CD8-positive, alpha-beta T cell (primary cell): ENCODE measurements at regions of chr10 and their contacts with region 1.

Region 1: GRCh38 chr10:100009793-100010676 is at the start of gene DNMBP:
- DNase-seq: peak; percentile 65 to 93 (median 83)
- ATAC-seq: peak; percentile 95
- H3K4me3 ChIP-seq: peak within 1 kb of the TSS; percentile 68 to 76
- H3K4me3 Mint-ChIP-seq: peak within 1 kb of the TSS; percentile 91
- H3K27ac ChIP-seq: peak within 1 kb of the TSS; percentile 36 to 40
- H3K27ac Mint-ChIP-seq: peak within 1 kb of the TSS; percentile 86
- H3K4me1 ChIP-seq: peaks cover 17% of the 10 kb centered on the region
- H3K4me1 Mint-ChIP-seq: peaks cover 44% of the 10 kb centered on the region
- H3K27me3 ChIP-seq: no peaks in the 10 kb centered on the region
- H3K27me3 Mint-ChIP-seq: no peaks in the 10 kb centered on the region
- CTCF ChIP-seq: peak; percentile 47
- total RNA-seq, gene DNMBP: 4.0 to 4.1 TPM

Region 2: GRCh38 chr10:98446661-98447221 is 1563.3 kb before region 1 on chr10 and contains the start of gene HPS1:
- CTCF ChIA-PET with region 1: no interaction called
- POLR2A ChIA-PET with region 1: no interaction called
- intact Hi-C with region 1: loop called in 1 of 2 experiments (anchors 5 kb)
- DNase-seq: peak; percentile 60 to 89 (median 79)
- ATAC-seq: peak; percentile 85
- H3K4me3 ChIP-seq: peak within 1 kb of the TSS; percentile 74 to 91
- H3K4me3 Mint-ChIP-seq: peak within 1 kb of the TSS; percentile 90
- H3K27ac ChIP-seq: peak within 1 kb of the TSS; percentile 81 to 90
- H3K27ac Mint-ChIP-seq: peak within 1 kb of the TSS; percentile 92
- H3K4me1 ChIP-seq: peaks cover 16% of the 10 kb centered on the region
- H3K4me1 Mint-ChIP-seq: peaks cover 45% of the 10 kb centered on the region
- H3K27me3 ChIP-seq: no peaks in the 10 kb centered on the region
- H3K27me3 Mint-ChIP-seq: peaks cover under 1% of the 10 kb centered on the region
- CTCF ChIP-seq: no peak
- total RNA-seq, gene HPS1: 54.1 to 54.3 TPM

Region 3: DNA sequence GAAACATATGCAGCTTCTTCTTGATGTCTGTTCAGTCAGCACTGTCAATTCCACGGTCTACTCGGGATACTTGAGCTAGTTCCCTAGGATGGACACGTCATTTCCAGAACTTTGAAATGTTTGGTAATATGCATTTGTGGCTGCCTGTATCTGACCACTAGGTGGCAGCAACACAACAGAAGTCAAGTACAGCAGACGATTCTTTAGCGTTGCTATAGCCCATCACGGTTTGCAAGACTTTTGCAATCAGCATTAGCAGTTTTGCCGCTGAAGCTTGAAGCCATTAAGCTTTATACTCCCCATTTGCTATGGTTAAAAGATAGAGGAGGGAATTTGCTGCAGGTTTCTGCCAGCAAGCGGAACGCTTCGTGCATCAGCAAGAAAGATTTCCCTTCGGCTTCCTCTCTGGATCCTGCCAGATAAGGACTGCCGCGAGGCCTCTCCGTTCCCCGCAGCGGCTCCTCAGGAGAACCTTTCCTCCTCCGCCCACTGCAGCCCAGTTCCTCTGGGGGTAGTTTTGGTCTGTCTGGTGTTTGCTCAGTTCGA is 164.1 kb before region 1 on chr10:
- CTCF ChIA-PET with region 1: interaction called, 124 read pairs
- POLR2A ChIA-PET with region 1: interaction called, 7 read pairs
- intact Hi-C with region 1: loop called (anchors 1 kb)
- DNase-seq: peak; percentile 28 to 87 (median 72)
- ATAC-seq: peak; percentile 84
- H3K4me3 ChIP-seq: peak overlapping the region in 1 of 2 experiments; percentile 7
- H3K4me3 Mint-ChIP-seq: peak overlapping the region; percentile 30
- H3K27ac ChIP-seq: no peak overlapping the region
- H3K27ac Mint-ChIP-seq: no peak overlapping the region
- H3K4me1 ChIP-seq: no peaks in the 10 kb centered on the region
- H3K4me1 Mint-ChIP-seq: peaks cover 7% of the 10 kb centered on the region
- H3K27me3 ChIP-seq: no peaks in the 10 kb centered on the region
- H3K27me3 Mint-ChIP-seq: no peaks in the 10 kb centered on the region
- CTCF ChIP-seq: peak; percentile 94

Region 4: DNA sequence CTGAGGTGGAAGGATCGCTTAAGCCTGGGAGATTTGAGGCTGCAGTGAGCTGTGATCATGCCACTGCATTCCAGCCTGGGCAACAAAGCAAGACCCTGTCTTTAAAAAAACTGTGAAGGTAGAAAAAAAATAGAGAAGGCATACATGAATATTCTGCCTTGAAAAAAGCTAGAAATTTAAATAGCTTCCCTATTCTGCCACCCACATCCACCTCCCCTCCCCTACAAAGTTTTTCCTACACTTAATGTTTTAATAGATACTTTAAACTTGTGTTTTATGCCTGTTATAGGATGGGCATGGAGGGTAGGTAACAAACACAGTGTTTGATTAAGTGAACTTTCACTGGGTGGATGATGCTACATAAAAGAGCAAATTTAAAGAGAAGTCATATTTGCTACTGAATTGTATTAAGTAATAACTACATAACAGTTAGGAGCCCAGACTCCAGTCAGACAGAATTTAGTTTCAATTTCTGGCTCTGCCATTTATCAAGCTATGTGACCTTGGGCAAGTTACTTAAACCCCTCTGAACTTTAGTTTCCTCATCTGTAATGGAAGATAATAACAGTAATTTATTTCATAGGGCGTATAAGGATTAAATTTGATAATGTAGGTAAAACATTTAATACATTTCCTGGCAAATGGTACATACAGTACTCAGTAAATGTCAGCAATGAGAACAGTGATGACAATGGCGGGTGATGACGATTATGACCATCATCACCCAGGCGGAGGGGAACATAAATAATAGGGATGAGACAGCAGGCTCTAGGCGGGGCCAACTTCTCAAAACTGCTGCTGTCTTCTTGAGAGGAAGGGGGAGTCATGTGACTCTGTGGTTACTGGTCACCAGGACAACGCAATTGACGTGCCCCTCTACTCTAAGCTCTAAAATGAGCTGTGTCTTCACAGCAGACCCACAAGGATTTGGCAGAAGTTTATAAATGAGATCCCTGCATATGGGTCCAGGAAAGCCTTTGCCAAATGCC is 16.0 kb before region 1 on chr10:
- CTCF ChIA-PET with region 1: interaction called, 14 read pairs
- POLR2A ChIA-PET with region 1: interaction called, 4 read pairs
- intact Hi-C with region 1: loop called (anchors 2 kb)
- DNase-seq: peak; percentile 18 to 83 (median 59)
- ATAC-seq: peak; percentile 97
- H3K4me3 ChIP-seq: peak overlapping the region in 1 of 2 experiments; percentile 6
- H3K4me3 Mint-ChIP-seq: peak overlapping the region; percentile 71
- H3K27ac ChIP-seq: peak overlapping the region; percentile 6 to 23
- H3K27ac Mint-ChIP-seq: peak overlapping the region; percentile 76
- H3K4me1 ChIP-seq: peaks cover 14% of the 10 kb centered on the region
- H3K4me1 Mint-ChIP-seq: peaks cover 16% of the 10 kb centered on the region
- H3K27me3 ChIP-seq: no peaks in the 10 kb centered on the region
- H3K27me3 Mint-ChIP-seq: no peaks in the 10 kb centered on the region
- CTCF ChIP-seq: no peak

Region 5: GRCh38 chr10:100185364-100186252 is 175.6 kb after region 1 on chr10 and contains the start of gene ERLIN1:
- CTCF ChIA-PET with region 1: no interaction called
- POLR2A ChIA-PET with region 1: no interaction called
- intact Hi-C with region 1: loop called (anchors 5 to 10 kb)
- DNase-seq: peak; percentile 78 to 95 (median 91)
- ATAC-seq: peak; percentile 93
- H3K4me3 ChIP-seq: peak within 1 kb of the TSS; percentile 68 to 96
- H3K4me3 Mint-ChIP-seq: peak within 1 kb of the TSS; percentile 98
- H3K27ac ChIP-seq: peak within 1 kb of the TSS; percentile 85 to 89
- H3K27ac Mint-ChIP-seq: peak within 1 kb of the TSS; percentile 95
- H3K4me1 ChIP-seq: peaks cover 24% of the 10 kb centered on the region
- H3K4me1 Mint-ChIP-seq: peaks cover 64% of the 10 kb centered on the region
- H3K27me3 ChIP-seq: no peaks in the 10 kb centered on the region
- H3K27me3 Mint-ChIP-seq: no peaks in the 10 kb centered on the region
- CTCF ChIP-seq: no peak
- total RNA-seq, gene ERLIN1: 2.0 to 3.1 TPM